GM12878 (cell line): ENCODE measurements at regions of chr10 and their contacts with region 1.

Region 1: DNA sequence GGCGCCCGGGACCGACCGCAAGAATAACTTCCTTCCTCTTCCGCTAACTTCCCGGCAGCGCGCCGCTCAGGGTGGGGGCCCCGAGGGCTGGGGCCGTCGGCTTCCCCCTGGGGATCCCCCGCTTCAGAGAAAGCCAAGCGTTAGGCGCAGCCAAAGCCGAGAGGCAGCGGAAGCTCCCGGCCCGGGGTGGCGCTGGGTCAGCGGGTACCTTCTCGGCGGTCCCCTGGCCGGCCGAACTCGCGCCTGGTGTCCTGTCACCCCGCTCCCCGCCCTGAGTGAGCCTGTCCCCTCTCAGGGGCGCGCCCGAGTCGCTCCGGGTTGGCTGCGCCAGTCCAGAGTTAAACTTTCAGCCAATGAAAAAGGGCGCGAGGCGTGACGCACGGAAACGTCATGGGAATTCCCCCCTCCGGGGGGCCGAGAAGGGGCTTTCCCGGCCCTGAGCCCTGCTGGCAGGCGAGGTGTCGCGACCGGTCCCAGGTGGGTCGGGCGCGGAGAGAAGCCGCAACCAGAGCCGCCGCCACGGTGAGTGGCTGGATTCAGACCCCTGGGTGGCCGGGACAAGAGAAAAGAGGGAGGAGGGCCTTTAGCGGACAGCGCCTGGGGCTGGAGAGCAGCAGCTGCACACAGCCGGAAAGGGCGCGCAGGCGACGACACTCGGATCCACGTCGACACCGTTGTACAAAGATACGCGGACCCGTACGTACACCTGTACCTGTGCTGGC is 1.3 kb upstream of the NFKB2 start:
- DNase-seq: peak; percentile 89
- ATAC-seq: peak; percentile 87
- H3K4me3 ChIP-seq: peak overlapping the region; percentile 100
- H3K27ac ChIP-seq: peak overlapping the region; percentile 93
- H3K4me1 ChIP-seq: peaks cover 17% of the 10 kb centered on the region
- H3K27me3 ChIP-seq: no peaks in the 10 kb centered on the region
- CTCF ChIP-seq: peak in 2 of 3 experiments; percentile 89 to 91; a peak in 2 of 6 replicates
- EP300 ChIP-seq: peak; percentile 21 to 50; a peak in 2 of 4 replicates
- POLR2A ChIP-seq: peak; percentile 85
- RAD21 ChIP-seq: peak; percentile 54

Region 2: DNA sequence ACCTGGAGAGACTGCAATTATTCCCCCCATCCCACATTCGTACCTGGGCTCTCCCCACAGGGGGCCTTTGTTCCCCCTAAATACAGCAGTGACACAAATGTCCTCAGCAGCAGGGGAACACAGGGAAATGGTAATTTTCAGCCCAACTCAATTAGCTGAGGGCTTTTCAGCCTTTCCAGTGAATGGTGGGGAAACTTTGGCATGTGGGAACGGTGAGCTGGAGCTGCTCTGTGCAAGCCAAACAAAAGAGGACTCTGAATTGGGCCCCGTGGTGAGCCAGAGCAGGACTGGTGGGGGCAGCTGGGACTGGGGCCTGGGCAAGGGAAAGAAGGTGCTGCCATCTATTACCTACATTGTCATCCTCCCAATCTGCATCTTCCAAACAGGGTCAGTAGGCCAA is 750.2 kb before region 1 on chr10:
- CTCF ChIA-PET with region 1: no interaction called
- POLR2A ChIA-PET with region 1: no interaction called
- RAD21 ChIA-PET with region 1: no interaction called
- SMC1A ChIA-PET with region 1: no interaction called
- in situ Hi-C with region 1: no loop called
- intact Hi-C with region 1: no loop called
- DNase-seq: no peak
- ATAC-seq: no peak
- H3K4me3 ChIP-seq: no peak overlapping the region
- H3K27ac ChIP-seq: no peak overlapping the region
- H3K4me1 ChIP-seq: no peaks in the 10 kb centered on the region
- H3K27me3 ChIP-seq: no peaks in the 10 kb centered on the region
- CTCF ChIP-seq: no peak
- EP300 ChIP-seq: no peak
- POLR2A ChIP-seq: no peak
- RAD21 ChIP-seq: no peak

Region 3: DNA sequence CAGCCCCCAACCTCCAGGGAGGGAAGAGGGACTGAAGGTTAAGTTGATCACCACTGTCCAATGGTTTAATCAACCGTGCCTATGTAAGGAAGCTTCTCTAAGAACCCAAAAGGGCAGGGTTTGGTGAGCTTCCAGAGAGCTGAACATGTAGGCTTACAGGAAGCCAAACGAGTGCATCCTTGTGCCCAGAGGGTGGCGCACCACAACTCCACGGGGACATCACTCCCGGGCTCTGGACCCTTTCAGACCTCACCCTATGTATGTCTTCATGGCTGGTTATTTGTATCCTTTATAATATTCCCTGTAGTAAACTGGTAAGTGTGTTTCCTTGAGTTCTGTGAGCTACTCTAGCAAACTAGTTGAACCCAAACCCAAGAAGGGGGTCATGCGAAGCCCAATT is 10.2 kb before region 1 on chr10:
- CTCF ChIA-PET with region 1: interaction called, 52 read pairs
- POLR2A ChIA-PET with region 1: interaction called, 12 read pairs
- RAD21 ChIA-PET with region 1: interaction called, 6 read pairs
- SMC1A ChIA-PET with region 1: interaction called, 4 read pairs
- in situ Hi-C with region 1: no loop called
- intact Hi-C with region 1: no loop called
- DNase-seq: no peak
- ATAC-seq: peak; percentile 59
- H3K4me3 ChIP-seq: no peak overlapping the region
- H3K27ac ChIP-seq: no peak overlapping the region
- H3K4me1 ChIP-seq: peaks cover 13% of the 10 kb centered on the region
- H3K27me3 ChIP-seq: no peaks in the 10 kb centered on the region
- CTCF ChIP-seq: peak in 1 of 3 experiments; percentile 26; a peak in 3 of 6 replicates
- EP300 ChIP-seq: no peak
- POLR2A ChIP-seq: no peak
- RAD21 ChIP-seq: no peak

Region 4: DNA sequence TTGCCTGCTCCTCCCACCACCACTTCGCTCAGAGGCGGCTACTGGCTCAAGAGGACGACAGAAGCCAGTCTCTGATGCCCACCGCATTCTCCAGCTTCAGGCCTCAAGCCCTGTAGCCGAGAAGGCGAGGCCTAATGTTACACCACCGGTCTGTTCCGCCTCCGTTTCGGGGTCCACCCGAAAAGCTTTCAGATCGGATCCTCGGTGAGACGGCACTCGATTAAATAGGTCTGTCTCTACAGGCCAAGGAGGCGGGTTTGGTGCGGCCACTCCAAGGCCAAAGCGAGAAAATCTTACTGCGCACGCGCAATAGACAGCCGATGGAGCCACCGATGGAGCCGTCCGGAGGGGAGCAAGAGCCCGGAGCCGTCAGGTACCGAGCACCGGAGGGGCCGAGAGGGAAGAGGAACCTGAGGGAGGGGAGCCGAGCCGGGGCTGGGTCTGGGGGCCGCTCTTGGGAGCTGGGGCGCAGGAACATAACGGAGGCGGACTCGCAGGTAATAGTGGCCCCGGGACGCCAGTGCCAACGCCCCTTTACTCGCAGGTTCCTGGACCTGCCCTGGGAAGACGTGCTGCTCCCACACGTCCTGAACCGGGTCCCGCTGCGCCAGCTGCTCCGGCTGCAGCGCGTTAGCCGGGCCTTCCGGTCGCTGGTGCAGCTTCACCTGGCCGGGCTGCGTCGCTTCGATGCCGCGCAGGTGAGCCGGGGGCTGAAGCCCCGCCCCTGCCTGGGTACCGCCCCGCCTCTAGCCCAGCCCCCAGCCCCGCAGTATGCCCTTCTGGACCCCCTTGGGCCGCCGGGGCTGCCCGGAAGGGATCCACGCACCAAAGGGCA is 26.8 kb after region 1 on chr10 and contains the start of gene FBXL15:
- CTCF ChIA-PET with region 1: interaction called, 90 read pairs
- POLR2A ChIA-PET with region 1: interaction called, 35 read pairs
- RAD21 ChIA-PET with region 1: interaction called, 10 read pairs
- SMC1A ChIA-PET with region 1: interaction called, 23 read pairs
- in situ Hi-C with region 1: no loop called
- intact Hi-C with region 1: loop called (anchors 1 kb)
- DNase-seq: peak; percentile 89
- ATAC-seq: peak; percentile 77
- H3K4me3 ChIP-seq: peak within 1 kb of the TSS; percentile 98
- H3K27ac ChIP-seq: peak within 1 kb of the TSS; percentile 85
- H3K4me1 ChIP-seq: peaks cover 18% of the 10 kb centered on the region
- H3K27me3 ChIP-seq: no peaks in the 10 kb centered on the region; a peak in 1 of 4 replicates
- CTCF ChIP-seq: no peak
- EP300 ChIP-seq: no peak
- POLR2A ChIP-seq: peak; percentile 79
- RAD21 ChIP-seq: no peak
- polyA plus RNA-seq, gene FBXL15: 0.13 to 0.66 TPM

Region 5: DNA sequence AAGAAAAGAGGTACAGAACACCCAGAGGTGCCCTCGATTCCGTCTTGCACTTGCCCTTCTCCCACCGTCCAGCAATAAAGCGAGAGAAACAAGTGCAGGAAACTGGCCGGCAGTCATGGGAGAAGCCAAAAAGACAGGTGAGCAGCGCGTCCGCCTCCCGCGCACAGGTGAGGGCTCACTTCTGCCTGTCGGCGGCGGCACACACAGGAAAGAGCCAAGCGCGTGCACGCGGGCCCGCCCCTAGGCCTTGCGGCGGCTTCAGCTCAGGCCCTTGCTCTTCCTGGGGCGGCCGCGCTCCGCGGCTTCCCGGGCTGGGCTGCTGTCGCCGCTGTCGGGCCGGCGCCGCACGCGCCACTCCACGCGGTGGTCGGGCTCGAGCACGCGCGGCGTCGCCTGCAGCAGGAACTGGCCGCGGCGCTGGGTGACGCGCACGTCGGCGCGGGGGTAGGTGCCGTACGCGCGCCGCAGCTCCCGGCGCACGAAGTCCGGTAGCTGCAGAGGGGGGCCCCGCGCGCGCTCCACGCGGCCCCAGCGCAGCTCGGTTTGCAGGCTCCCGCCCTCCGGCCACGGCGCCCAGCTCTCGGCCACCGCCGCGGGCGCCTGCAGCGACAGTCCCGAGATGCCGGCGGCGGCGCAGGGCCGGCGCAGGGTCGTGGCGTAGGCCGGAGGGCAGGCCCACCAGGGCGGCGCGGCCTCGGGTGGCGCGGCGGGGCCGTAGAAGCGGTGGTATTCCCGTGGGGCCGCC is 56.1 kb after region 1 on chr10:
- CTCF ChIA-PET with region 1: interaction called, 7 read pairs
- POLR2A ChIA-PET with region 1: interaction called, 44 read pairs
- RAD21 ChIA-PET with region 1: interaction called, 7 read pairs
- SMC1A ChIA-PET with region 1: interaction called, 10 read pairs
- in situ Hi-C with region 1: no loop called
- intact Hi-C with region 1: no loop called
- DNase-seq: peak; percentile 56
- ATAC-seq: peak; percentile 88
- H3K4me3 ChIP-seq: peak overlapping the region; percentile 99
- H3K27ac ChIP-seq: peak overlapping the region; percentile 88
- H3K4me1 ChIP-seq: peaks cover 18% of the 10 kb centered on the region
- H3K27me3 ChIP-seq: no peaks in the 10 kb centered on the region
- CTCF ChIP-seq: no peak
- EP300 ChIP-seq: no peak
- POLR2A ChIP-seq: peak; percentile 79
- RAD21 ChIP-seq: no peak

Region 6: GRCh38 chr10:102476466-102477141 is 82.4 kb after region 1 on chr10:
- CTCF ChIA-PET with region 1: interaction called, 16 read pairs
- POLR2A ChIA-PET with region 1: interaction called, 4 read pairs
- RAD21 ChIA-PET with region 1: interaction called, 21 read pairs
- SMC1A ChIA-PET with region 1: interaction called, 3 read pairs
- in situ Hi-C with region 1: no loop called
- intact Hi-C with region 1: loop called (anchors 1 kb)
- DNase-seq: no peak
- ATAC-seq: no peak
- H3K4me3 ChIP-seq: no peak overlapping the region
- H3K27ac ChIP-seq: no peak overlapping the region
- H3K4me1 ChIP-seq: no peaks in the 10 kb centered on the region
- H3K27me3 ChIP-seq: no peaks in the 10 kb centered on the region
- CTCF ChIP-seq: no peak
- EP300 ChIP-seq: no peak
- POLR2A ChIP-seq: no peak
- RAD21 ChIP-seq: no peak

Region 7: DNA sequence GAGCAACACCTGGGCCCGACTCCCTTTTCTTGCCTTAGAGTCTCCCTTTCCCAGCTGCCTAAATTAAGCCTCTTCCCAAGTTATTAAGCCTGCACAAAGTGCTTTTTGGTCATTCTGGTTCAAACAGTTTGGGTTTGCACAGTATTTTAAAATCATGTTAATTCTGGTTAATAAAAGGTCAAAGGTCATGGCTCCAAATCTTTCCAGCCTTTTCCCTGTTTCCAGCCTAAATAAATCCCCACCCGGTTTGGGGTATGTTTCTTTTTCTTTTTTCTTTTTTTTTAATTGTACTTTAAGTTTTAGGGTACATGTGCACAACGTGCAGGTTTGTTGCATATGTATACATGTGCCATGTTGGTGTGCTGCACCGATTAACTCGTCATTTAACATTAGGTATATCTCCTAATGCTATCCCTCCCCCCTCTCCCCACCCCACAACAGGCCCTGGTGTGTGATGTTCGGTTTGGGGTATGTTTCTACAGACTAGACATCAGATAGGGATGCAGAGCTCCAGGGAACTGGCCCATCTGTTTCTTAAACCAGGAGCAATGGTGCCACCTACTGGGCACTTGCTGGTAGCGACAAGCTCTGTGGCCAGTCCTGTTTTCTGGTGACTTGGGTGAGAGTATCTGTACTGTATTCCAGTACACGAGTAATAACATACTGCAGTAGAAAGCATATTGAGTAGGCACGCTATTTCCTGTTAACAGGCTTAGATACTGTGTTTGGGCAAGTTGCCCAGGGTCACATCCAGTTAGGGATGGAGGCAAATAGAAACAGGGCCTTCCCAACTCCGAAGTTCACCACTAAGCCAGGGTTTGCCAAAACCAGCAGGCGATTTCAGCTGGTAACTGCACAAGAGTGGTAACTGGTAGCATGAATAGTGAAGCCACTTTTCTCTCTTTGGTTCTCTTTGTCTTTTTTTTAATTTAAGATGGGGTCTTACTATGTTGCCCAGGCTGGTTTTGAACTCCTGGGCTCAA is 189.5 kb after region 1 on chr10:
- CTCF ChIA-PET with region 1: interaction called, 12 read pairs
- POLR2A ChIA-PET with region 1: interaction called, 3 read pairs
- RAD21 ChIA-PET with region 1: interaction called, 14 read pairs
- SMC1A ChIA-PET with region 1: interaction called, 6 read pairs
- in situ Hi-C with region 1: no loop called
- intact Hi-C with region 1: loop called (anchors 5 kb)
- DNase-seq: peak; percentile 51
- ATAC-seq: peak; percentile 100
- H3K4me3 ChIP-seq: no peak overlapping the region
- H3K27ac ChIP-seq: no peak overlapping the region
- H3K4me1 ChIP-seq: no peaks in the 10 kb centered on the region
- H3K27me3 ChIP-seq: no peaks in the 10 kb centered on the region
- CTCF ChIP-seq: peak; percentile 86 to 96 (median 92)
- EP300 ChIP-seq: no peak
- POLR2A ChIP-seq: no peak
- RAD21 ChIP-seq: peak; percentile 92